Aorta (tissue), 5 donors: ENCODE measurements at regions of chr1 and their contacts with region 1.

Region 1: DNA sequence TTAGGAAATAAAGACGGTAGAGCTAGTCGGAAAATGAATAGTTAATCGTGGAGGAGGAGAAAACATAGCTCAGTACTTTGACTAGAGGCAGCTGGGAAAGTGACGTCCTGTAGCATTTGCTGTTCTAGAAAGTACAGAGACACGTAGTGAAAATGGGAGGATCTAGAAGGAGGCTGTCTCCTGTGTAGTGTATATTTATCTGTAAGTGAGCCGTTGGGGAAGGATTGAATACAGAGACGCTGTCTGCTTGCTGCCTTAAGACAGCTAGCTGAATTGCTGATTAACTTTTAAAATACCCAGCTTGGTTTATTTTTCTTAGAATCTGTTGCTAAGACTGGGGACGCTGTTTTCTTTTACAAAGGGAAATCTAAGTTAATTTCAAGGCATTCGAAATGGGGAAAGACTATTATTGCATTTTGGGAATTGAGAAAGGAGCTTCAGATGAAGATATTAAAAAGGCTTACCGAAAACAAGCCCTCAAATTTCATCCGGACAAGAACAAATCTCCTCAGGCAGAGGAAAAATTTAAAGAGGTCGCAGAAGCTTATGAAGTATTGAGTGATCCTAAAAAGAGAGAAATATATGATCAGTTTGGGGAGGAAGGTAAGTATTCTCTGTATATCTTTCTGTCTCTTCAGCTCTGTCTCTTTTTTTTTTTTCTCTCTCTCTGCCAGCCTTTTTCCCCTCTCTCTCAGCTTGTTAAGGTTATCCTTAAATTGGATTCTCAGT is at the start of gene DNAJB4:
- DNase-seq: peak in 1 of 2 donors; percentile 64
- ATAC-seq: peak; percentile 99
- H3K4me3 ChIP-seq: peak within 1 kb of the TSS; percentile 98 to 100
- H3K27ac ChIP-seq: peak within 1 kb of the TSS in 1 of 2 donors; percentile 90
- H3K4me1 ChIP-seq: no peaks in the 10 kb centered on the region
- H3K27me3 ChIP-seq: no peaks in the 10 kb centered on the region
- total RNA-seq, gene DNAJB4: 76.7 to 137 TPM

Region 2: GRCh38 chr1:77978969-77979876 is 25.7 kb before region 1 on chr1 and contains the start of gene FUBP1:
- intact Hi-C with region 1: loop called (anchors 1 kb)
- DNase-seq: peak; percentile 96
- ATAC-seq: peak; percentile 98
- H3K4me3 ChIP-seq: peak within 1 kb of the TSS; percentile 96 to 100
- H3K27ac ChIP-seq: peak within 1 kb of the TSS; percentile 99
- H3K4me1 ChIP-seq: no peaks in the 10 kb centered on the region
- H3K27me3 ChIP-seq: no peaks in the 10 kb centered on the region
- total RNA-seq, gene FUBP1: 101 to 142 TPM

Region 3: GRCh38 chr1:78055565-78056132 is 50.8 kb after region 1 on chr1:
- intact Hi-C with region 1: loop called in 1 of 2 experiments (anchors 5 kb)
- DNase-seq: no peak
- ATAC-seq: no peak
- H3K4me3 ChIP-seq: no peak overlapping the region
- H3K27ac ChIP-seq: no peak overlapping the region
- H3K4me1 ChIP-seq: no peaks in the 10 kb centered on the region
- H3K27me3 ChIP-seq: no peaks in the 10 kb centered on the region

Region 4: DNA sequence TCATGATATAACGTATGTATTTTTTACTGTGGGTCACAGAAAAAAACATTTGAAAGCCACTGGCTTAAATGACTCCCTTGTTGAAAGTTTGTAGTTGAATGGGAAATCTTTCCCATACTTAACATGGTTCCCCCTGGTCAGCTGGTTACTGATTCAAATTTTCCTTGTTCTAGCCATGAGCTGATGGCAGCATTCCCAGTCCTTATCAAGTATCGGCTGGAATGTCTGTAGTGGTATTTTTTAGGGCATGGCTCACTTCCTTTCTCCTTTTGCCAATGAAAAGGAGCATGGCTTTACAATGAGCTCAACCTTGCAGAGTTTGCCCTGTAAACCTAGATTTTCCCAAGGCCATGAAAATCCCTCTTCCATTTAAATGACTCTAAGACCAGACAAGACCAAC is 96.6 kb after region 1 on chr1:
- intact Hi-C with region 1: loop called (anchors 2 to 5 kb)
- DNase-seq: peak in 1 of 2 donors; percentile 55
- ATAC-seq: peak; percentile 85
- H3K4me3 ChIP-seq: no peak overlapping the region
- H3K27ac ChIP-seq: peak overlapping the region in 1 of 2 donors; percentile 43
- H3K4me1 ChIP-seq: peaks cover 3 to 16% of the 10 kb centered on the region in 2 donors
- H3K27me3 ChIP-seq: no peaks in the 10 kb centered on the region